ENCODE measurements at regions of chr2 and their contacts with region 1.

Region 1: DNA sequence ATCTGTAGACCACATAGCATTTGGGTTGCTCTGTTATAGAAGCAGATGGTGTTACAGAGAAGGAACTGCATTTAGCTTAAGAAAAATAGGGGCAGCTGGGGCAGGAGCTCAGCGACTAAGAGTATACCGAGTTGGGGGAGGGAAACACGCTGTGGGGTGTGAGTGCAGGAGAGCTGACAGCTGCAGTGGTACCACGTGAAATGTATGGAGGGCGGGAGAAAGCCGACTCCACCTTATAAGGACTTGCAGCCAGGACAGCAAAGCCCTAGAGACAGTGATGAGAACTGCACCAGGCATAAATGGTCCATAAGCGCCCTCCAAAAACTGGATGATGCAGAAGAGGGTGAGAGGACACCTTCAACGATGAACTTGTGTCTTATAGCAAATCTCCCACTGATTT is 237.6 kb downstream of the PRKCE start:
- DNase-seq: peak; percentile 78
- ATAC-seq: peak; percentile 81
- H3K4me3 ChIP-seq: no peak overlapping the region
- H3K4me3 Mint-ChIP-seq: peak overlapping the region; percentile 73
- H3K27ac ChIP-seq: peak overlapping the region; percentile 0 to 50
- H3K27ac Mint-ChIP-seq: peak overlapping the region; percentile 43
- H3K4me1 ChIP-seq: peaks cover 87 to 91% of the 10 kb centered on the region in 2 donors
- H3K4me1 Mint-ChIP-seq: peaks cover 91% of the 10 kb centered on the region
- H3K27me3 ChIP-seq: no peaks in the 10 kb centered on the region
- H3K27me3 Mint-ChIP-seq: no peaks in the 10 kb centered on the region
- CTCF ChIP-seq: peak; percentile 49

Region 2: DNA sequence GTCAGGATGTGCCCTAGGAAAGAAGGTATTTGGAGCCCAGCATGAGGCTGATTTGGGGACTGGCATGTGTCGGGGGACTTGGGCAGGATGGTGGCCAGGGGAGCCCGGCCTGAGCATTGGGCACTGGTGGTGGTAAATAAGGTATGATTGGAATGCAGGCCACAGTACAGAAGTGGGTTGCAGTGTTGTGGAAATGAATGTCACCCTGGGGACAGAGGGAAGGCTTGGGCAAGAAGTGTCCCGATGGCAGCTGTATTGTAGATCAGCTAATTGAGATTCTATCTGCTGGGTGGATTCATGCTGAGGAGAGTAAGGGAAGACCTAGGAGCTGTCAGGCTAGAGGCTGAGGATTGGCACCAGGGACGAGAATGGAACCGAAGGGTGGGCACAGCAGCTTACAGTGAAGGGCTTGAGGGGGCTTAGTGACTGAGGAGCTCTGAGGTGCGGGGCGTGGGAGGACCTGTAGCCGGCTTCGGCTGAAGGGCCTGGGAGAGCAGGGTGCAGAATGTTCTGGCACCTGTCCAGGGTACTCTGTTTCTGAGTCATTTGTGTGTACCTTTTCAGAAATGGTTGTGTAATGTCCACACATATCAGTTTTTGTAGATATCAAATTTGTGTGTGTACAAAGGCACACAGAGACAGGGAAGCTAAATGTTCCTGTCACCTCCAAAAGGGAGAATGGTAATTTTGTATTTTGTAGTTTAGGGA is 67.3 kb before region 1 on chr2:
- CTCF ChIA-PET with region 1: no interaction called
- POLR2A ChIA-PET with region 1: interaction called, 10 read pairs
- intact Hi-C with region 1: no loop called
- DNase-seq: no peak
- ATAC-seq: no peak
- H3K4me3 ChIP-seq: no peak overlapping the region
- H3K4me3 Mint-ChIP-seq: no peak overlapping the region
- H3K27ac ChIP-seq: no peak overlapping the region
- H3K27ac Mint-ChIP-seq: peak overlapping the region; percentile 10
- H3K4me1 ChIP-seq: peaks cover 13 to 26% of the 10 kb centered on the region in 2 donors
- H3K4me1 Mint-ChIP-seq: peaks cover 67% of the 10 kb centered on the region
- H3K27me3 ChIP-seq: no peaks in the 10 kb centered on the region
- H3K27me3 Mint-ChIP-seq: no peaks in the 10 kb centered on the region
- CTCF ChIP-seq: no peak

Region 3: GRCh38 chr2:45833968-45834344 is 55.1 kb before region 1 on chr2:
- CTCF ChIA-PET with region 1: interaction called, 4 read pairs
- POLR2A ChIA-PET with region 1: no interaction called
- intact Hi-C with region 1: loop called (anchors 2 kb)
- DNase-seq: peak; percentile 74
- ATAC-seq: peak; percentile 72
- H3K4me3 ChIP-seq: no peak overlapping the region
- H3K4me3 Mint-ChIP-seq: peak overlapping the region; percentile 44
- H3K27ac ChIP-seq: peak overlapping the region; percentile 43 to 72
- H3K27ac Mint-ChIP-seq: peak overlapping the region; percentile 90
- H3K4me1 ChIP-seq: peaks cover 58 to 60% of the 10 kb centered on the region in 2 donors
- H3K4me1 Mint-ChIP-seq: peaks cover 64% of the 10 kb centered on the region
- H3K27me3 ChIP-seq: no peaks in the 10 kb centered on the region
- H3K27me3 Mint-ChIP-seq: no peaks in the 10 kb centered on the region
- CTCF ChIP-seq: no peak

Region 4: GRCh38 chr2:45909663-45910191 is 20.7 kb after region 1 on chr2:
- CTCF ChIA-PET with region 1: interaction called, 3 read pairs
- POLR2A ChIA-PET with region 1: no interaction called
- intact Hi-C with region 1: loop called (anchors 2 kb)
- DNase-seq: peak; percentile 86
- ATAC-seq: peak; percentile 83
- H3K4me3 ChIP-seq: no peak overlapping the region
- H3K4me3 Mint-ChIP-seq: peak overlapping the region; percentile 48
- H3K27ac ChIP-seq: peak overlapping the region; percentile 43 to 85
- H3K27ac Mint-ChIP-seq: peak overlapping the region; percentile 59
- H3K4me1 ChIP-seq: peaks cover 49 to 63% of the 10 kb centered on the region in 2 donors
- H3K4me1 Mint-ChIP-seq: peaks cover 82% of the 10 kb centered on the region
- H3K27me3 ChIP-seq: no peaks in the 10 kb centered on the region
- H3K27me3 Mint-ChIP-seq: no peaks in the 10 kb centered on the region
- CTCF ChIP-seq: no peak